Tibial artery (tissue), 4 donors: ENCODE measurements at regions of chr2 and their contacts with region 1.

Region 1: DNA sequence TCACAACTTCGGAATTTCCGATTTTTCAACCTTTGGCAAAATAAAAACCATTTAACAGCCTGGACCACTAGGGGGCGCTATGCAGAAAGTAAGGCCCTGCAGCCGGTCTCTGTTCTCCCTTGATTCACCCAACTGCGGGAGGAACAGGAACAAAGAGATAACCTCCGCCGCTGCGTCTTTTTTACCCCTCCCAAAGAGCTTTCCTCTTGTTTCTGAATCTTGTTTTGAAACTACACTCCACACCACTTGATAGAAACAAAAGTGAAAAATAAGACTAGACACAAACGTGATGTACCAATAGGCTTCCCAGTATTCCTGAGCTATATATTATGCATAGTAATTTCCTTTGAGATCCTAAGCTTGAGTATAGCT is 231.2 kb downstream of the MYO3B start:
- DNase-seq: peak; percentile 69 to 70
- H3K4me3 ChIP-seq: no peak overlapping the region
- H3K27ac ChIP-seq: no peak overlapping the region
- H3K4me1 ChIP-seq: peaks cover 0 to 12% (median 1%) of the 10 kb centered on the region in 4 donors
- H3K27me3 ChIP-seq: no peaks in the 10 kb centered on the region
- CTCF ChIP-seq: peak; percentile 75 to 79

Region 2: DNA sequence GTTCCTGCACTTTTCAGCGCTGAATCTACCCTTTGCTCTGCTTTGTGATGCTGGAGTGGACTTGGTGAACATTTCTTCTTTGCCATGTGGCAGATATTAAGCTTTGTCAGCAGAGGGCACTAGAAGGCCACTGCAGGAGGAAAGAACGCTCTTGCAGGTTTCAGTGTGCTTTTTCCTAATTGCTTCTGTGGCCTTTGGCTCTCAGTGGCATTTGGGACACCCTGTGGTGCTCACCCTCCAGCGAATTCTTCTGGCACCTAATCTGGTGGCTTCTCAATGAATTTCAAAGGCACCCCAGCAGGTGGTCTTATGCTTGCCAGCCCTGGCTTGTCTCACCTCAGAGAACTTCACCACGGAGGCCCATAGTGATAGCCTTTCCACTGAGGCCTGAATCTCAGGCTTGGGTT is 84.5 kb before region 1 on chr2:
- intact Hi-C with region 1: no loop called
- DNase-seq: no peak
- H3K4me3 ChIP-seq: no peak overlapping the region
- H3K27ac ChIP-seq: no peak overlapping the region
- H3K4me1 ChIP-seq: no peaks in the 10 kb centered on the region
- H3K27me3 ChIP-seq: no peaks in the 10 kb centered on the region
- CTCF ChIP-seq: peak; percentile 26 to 38

Region 3: GRCh38 chr2:170715062-170715931 is 306.1 kb after region 1 on chr2 and contains the start of gene SP5:
- intact Hi-C with region 1: loop called (anchors 10 kb)
- DNase-seq: peak; percentile 51 to 78
- H3K4me3 ChIP-seq: peak within 1 kb of the TSS; percentile 47 to 63
- H3K27ac ChIP-seq: peak within 1 kb of the TSS in 1 of 2 donors; percentile 55
- H3K4me1 ChIP-seq: peaks cover 0 to 52% (median 48%) of the 10 kb centered on the region in 4 donors
- H3K27me3 ChIP-seq: peaks cover 0 to 61% of the 10 kb centered on the region in 2 donors
- CTCF ChIP-seq: peak in 1 of 2 experiments; percentile 4

Region 4: GRCh38 chr2:171991027-171991426 is 1581.9 kb after region 1 on chr2:
- intact Hi-C with region 1: loop called (anchors 5 kb)
- DNase-seq: no peak
- H3K4me3 ChIP-seq: no peak overlapping the region
- H3K27ac ChIP-seq: no peak overlapping the region
- H3K4me1 ChIP-seq: no peaks in the 10 kb centered on the region
- H3K27me3 ChIP-seq: no peaks in the 10 kb centered on the region
- CTCF ChIP-seq: no peak